Endothelial cell of umbilical vein (primary cell): ENCODE measurements at regions of chr11 and their contacts with region 1.

Region 1: DNA sequence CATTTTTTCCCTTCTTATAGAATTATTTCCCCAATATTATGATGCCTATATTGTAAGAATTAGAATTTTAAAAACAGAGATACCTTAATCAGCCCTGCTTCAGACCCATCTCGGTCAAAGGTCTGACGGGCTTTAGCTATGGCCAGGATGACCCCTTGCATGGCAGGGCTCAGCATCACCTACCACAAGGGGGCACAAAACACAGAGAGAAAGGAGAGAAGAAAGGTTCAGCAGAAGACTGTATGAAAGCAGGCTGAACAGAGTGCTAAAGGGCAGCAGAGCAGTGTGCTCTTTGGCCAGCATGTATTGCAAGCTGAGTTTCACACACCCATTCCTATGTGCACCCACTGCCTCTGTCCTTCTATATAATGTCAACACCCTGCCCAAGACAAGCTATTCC is 26.8 kb downstream of the CLDN25 start:
- DNase-seq: peak; percentile 30
- H3K4me3 ChIP-seq: no peak overlapping the region
- H3K27ac ChIP-seq: no peak overlapping the region
- H3K4me1 ChIP-seq: no peaks in the 10 kb centered on the region
- H3K27me3 ChIP-seq: no peaks in the 10 kb centered on the region
- CTCF ChIP-seq: peak; percentile 35 to 65
- POLR2A ChIP-seq: no peak

Region 2: DNA sequence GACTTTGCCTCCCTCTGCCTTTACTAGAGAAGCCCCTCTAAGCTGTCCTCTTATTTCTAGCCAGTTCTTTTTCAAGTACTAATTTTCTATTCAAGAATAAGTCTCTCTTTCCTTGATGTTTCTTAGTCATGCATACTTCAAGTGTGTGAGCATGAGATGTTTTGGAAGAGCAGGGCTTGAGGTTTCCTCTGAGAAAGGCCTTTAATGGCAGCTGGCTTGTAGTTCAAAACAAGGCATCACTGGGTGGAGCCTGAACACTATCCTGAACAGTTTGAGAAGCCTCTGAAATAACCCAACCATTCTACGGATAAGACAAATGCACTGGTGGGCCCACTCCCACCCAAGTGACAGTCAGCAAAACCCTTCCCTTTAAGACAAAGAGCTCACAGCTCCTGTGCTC is 10.8 kb after region 1 on chr11:
- CTCF ChIA-PET with region 1: interaction called, 17 read pairs
- POLR2A ChIA-PET with region 1: no interaction called
- dilution Hi-C with region 1: no loop called
- intact Hi-C with region 1: no loop called
- DNase-seq: no peak
- H3K4me3 ChIP-seq: no peak overlapping the region
- H3K27ac ChIP-seq: no peak overlapping the region
- H3K4me1 ChIP-seq: no peaks in the 10 kb centered on the region
- H3K27me3 ChIP-seq: no peaks in the 10 kb centered on the region
- CTCF ChIP-seq: no peak
- POLR2A ChIP-seq: no peak

Region 3: DNA sequence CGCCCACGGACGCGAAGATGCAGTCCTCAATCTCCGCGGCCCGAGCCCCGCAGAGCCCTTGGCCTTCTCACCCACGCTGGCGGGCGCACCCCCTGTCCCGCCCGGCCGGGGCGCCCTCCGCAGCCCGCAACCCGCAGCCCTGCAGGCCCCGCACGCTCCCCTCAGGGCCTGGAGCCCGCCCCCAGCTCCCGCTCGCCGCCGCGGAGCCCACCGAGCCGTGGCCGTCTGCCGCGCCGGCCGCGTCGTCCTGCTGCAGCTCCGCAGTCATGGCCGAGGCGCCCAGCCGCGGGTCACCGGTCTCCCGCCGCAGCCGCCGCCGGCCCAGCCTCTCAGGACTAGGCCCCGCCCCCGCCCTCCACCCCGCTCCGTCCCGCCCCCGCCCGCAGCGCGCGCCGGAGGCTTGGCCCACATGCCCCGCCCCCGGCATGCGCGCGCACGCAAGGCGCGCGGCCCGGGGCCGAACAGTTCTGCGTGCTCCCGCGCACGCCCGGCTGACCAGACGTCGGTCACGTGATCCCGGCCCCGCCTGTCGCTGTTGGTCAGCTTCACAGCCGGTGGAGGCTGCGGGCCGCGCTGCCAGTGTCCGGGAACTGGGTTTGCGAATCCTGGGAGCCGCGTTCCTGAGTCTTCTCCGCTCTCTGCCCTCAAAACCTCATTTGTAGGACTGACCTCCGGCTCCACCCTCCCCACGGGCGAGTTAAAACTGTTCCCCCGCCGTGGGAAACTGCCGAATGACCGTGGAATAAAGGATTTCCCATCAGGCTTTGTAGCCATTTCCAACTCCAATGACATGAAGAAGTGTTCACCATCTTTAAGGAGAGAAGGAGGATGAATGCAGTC is 69.0 kb after region 1 on chr11 and contains the start of gene USP28:
- CTCF ChIA-PET with region 1: interaction called, 11 read pairs
- POLR2A ChIA-PET with region 1: no interaction called
- dilution Hi-C with region 1: no loop called
- intact Hi-C with region 1: loop called (anchors 2 kb)
- DNase-seq: peak; percentile 95
- H3K4me3 ChIP-seq: peak within 1 kb of the TSS; percentile 47 to 94 (median 94)
- H3K27ac ChIP-seq: peak within 1 kb of the TSS; percentile 92
- H3K4me1 ChIP-seq: peaks cover 24% of the 10 kb centered on the region
- H3K27me3 ChIP-seq: no peaks in the 10 kb centered on the region
- CTCF ChIP-seq: no peak
- POLR2A ChIP-seq: peak; percentile 97
- total RNA-seq, gene USP28: 29.6 and 30.5 TPM in 2 replicates

Region 4: GRCh38 chr11:113977071-113977490 is 170.7 kb after region 1 on chr11:
- CTCF ChIA-PET with region 1: no interaction called
- POLR2A ChIA-PET with region 1: no interaction called
- dilution Hi-C with region 1: no loop called
- intact Hi-C with region 1: no loop called
- DNase-seq: no peak
- H3K4me3 ChIP-seq: no peak overlapping the region
- H3K27ac ChIP-seq: no peak overlapping the region
- H3K4me1 ChIP-seq: peaks cover 4% of the 10 kb centered on the region
- H3K27me3 ChIP-seq: peaks cover 8 to 9% of the 10 kb centered on the region in 2 experiments
- CTCF ChIP-seq: no peak
- POLR2A ChIP-seq: no peak

Region 5: DNA sequence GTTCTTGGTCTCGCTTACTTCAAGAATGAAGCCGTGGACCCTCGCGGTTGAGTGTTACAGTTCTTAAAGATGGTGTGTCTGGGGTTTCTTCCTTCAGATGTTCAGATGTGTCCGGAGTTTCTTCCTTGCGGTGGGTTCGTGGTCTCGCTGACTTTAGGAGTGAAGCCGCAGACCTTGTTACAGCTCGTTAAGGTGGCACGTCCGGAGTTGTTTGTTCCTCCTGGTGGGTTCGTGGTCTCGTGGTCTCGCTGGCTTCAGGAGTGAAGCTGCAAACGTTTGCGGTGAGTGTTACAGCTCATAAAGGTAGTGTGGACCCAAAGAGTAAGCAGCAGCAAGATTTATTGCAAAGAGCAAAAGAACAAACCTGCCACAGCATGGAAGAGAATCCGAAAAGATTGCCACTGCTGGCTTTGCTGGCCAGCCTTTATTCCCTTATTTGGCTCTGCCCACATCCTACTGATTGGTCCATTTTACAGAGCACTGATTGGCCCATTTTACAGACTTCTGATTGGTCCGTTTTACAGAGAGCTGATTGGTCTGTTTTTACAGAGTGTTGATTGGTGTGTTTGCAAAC is 844.8 kb after region 1 on chr11:
- CTCF ChIA-PET with region 1: no interaction called
- POLR2A ChIA-PET with region 1: no interaction called
- dilution Hi-C with region 1: no loop called
- intact Hi-C with region 1: no loop called
- DNase-seq: no peak
- H3K4me3 ChIP-seq: no peak overlapping the region
- H3K27ac ChIP-seq: no peak overlapping the region
- H3K4me1 ChIP-seq: no peaks in the 10 kb centered on the region
- H3K27me3 ChIP-seq: no peaks in the 10 kb centered on the region
- CTCF ChIP-seq: no peak
- POLR2A ChIP-seq: no peak